ENCODE measurements at regions of chr11 and their contacts with region 1.

Region 1: DNA sequence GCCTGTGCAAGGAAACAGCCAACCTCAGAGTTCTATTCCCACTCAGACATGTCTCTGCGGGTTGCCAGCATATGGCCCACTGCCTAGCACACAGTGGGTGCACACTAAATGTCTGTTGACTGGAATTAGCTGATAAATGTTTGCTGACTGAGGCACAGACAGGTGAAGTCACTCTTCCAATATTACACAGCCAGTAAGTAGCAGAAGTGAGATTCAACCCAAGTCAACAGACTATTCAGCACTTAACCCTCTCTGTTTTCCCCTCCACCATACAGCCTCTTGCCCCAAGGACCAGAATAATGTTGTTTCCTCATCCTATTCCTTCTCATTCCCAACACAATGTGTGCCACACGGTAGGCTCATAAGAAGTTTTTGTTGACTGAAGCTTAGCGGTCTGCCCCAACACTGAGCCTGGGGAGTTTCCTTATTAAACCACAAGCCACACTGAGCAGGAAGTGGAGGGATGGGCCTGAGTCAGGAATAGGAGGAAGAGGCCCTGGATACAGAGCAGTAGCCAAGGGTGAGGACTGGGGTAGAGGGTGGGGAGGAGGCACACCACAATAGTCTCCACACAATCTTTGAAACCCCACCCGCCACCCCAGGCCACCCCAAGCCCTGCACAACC is 15.7 kb upstream of the IL10RA start:
- DNase-seq: peak; percentile 83
- H3K4me3 Mint-ChIP-seq: peak overlapping the region; percentile 60
- H3K27ac Mint-ChIP-seq: peak overlapping the region; percentile 78
- H3K4me1 Mint-ChIP-seq: peaks cover 64% of the 10 kb centered on the region
- H3K27me3 Mint-ChIP-seq: no peaks in the 10 kb centered on the region

Region 2: GRCh38 chr11:117734601-117735024 is 235.9 kb before region 1 on chr11:
- intact Hi-C with region 1: no loop called
- DNase-seq: no peak
- H3K4me3 Mint-ChIP-seq: no peak overlapping the region
- H3K27ac Mint-ChIP-seq: no peak overlapping the region
- H3K4me1 Mint-ChIP-seq: no peaks in the 10 kb centered on the region
- H3K27me3 Mint-ChIP-seq: peaks cover 3% of the 10 kb centered on the region

Region 3: GRCh38 chr11:117953024-117953671 is 17.4 kb before region 1 on chr11:
- intact Hi-C with region 1: loop called (anchors 1 kb)
- DNase-seq: peak; percentile 80
- H3K4me3 Mint-ChIP-seq: peak overlapping the region; percentile 71
- H3K27ac Mint-ChIP-seq: peak overlapping the region; percentile 85
- H3K4me1 Mint-ChIP-seq: peaks cover 60% of the 10 kb centered on the region
- H3K27me3 Mint-ChIP-seq: no peaks in the 10 kb centered on the region

Region 4: GRCh38 chr11:118046051-118046963 is 75.8 kb after region 1 on chr11:
- intact Hi-C with region 1: loop called (anchors 2 kb)
- DNase-seq: peak; percentile 76
- H3K4me3 Mint-ChIP-seq: peak overlapping the region; percentile 51
- H3K27ac Mint-ChIP-seq: peak overlapping the region; percentile 87
- H3K4me1 Mint-ChIP-seq: peaks cover 75% of the 10 kb centered on the region
- H3K27me3 Mint-ChIP-seq: no peaks in the 10 kb centered on the region